ENCODE measurements at regions of chr2 and their contacts with region 1.

Region 1: DNA sequence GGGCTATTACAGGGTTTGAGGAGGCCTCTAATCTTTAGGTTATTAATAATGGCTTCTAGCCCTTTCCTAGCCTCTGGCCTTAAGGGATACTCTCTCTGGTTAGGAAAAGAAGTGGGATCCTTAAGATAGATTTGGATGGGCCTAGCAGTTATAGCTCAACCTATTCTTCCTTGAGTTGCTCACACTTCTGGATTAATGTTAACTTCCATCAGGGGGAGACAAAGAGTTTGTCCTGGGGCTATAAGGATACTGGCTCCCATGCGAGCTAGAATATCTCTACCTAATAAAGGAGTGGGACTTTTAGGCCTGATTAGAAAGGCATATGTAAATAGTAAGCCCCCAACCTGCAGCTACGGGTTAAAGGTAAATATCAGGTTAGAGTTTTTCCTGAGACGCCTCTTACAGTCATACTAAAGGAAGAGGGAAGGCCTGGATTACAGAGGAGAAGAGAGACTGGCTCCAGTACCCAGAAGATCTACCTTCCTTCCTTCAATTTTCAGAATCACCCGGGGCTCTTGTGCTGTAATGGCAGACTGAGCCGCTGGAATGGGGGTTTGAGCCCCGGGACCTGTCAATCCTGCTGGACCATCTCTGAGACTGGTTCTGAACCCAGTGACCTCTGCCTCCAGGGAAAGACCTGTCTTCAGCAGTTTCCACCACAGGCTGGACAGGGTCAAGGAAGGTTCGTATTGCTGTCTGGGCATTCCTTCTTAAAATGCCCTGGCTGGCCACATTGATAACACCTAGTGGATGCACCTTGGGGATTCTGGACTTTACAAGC is 14.1 kb upstream of the PTH2R start:
- DNase-seq: no peak
- ATAC-seq: peak; percentile 59
- H3K4me3 ChIP-seq: no peak overlapping the region
- H3K27ac ChIP-seq: no peak overlapping the region
- H3K4me1 ChIP-seq: no peaks in the 10 kb centered on the region
- H3K27me3 ChIP-seq: no peaks in the 10 kb centered on the region
- CTCF ChIP-seq: peak in 2 of 3 experiments; percentile 39; a peak in 3 of 6 replicates
- POLR2A ChIP-seq: no peak
- RAD21 ChIP-seq: peak; percentile 19; the same call in 1 of the 2 replicates

Region 2: GRCh38 chr2:209556354-209556961 is 1164.0 kb after region 1 on chr2:
- CTCF ChIA-PET with region 1: no interaction called
- POLR2A ChIA-PET with region 1: no interaction called
- RAD21 ChIA-PET with region 1: no interaction called
- intact Hi-C with region 1: loop called (anchors 10 kb)
- DNase-seq: peak; percentile 27
- ATAC-seq: peak; percentile 92
- H3K4me3 ChIP-seq: no peak overlapping the region
- H3K27ac ChIP-seq: no peak overlapping the region
- H3K4me1 ChIP-seq: no peaks in the 10 kb centered on the region
- H3K27me3 ChIP-seq: no peaks in the 10 kb centered on the region
- CTCF ChIP-seq: peak; percentile 48 to 76 (median 58)
- POLR2A ChIP-seq: no peak
- RAD21 ChIP-seq: peak; percentile 85

Measured in HCT116 (cell line).